ENCODE measurements at regions of chr19 and their contacts with region 1.

Region 1: GRCh38 chr19:35352448-35353304 is 5.0 kb downstream of the FFAR1 start:
- DNase-seq: peak; percentile 64 to 76 (median 73)
- H3K4me3 ChIP-seq: no peak overlapping the region
- H3K4me3 Mint-ChIP-seq: peak overlapping the region in 1 of 8 donors; percentile 17
- H3K27ac ChIP-seq: no peak overlapping the region
- H3K27ac Mint-ChIP-seq: peak overlapping the region in 2 of 7 donors; percentile 19 to 77
- H3K4me1 ChIP-seq: peaks cover 22% of the 10 kb centered on the region
- H3K4me1 Mint-ChIP-seq: peaks cover 10 to 18% (median 12%) of the 10 kb centered on the region in 4 donors
- H3K27me3 ChIP-seq: no peaks in the 10 kb centered on the region
- H3K27me3 Mint-ChIP-seq: peaks cover 0 to 8% of the 10 kb centered on the region in 2 donors

Region 2: DNA sequence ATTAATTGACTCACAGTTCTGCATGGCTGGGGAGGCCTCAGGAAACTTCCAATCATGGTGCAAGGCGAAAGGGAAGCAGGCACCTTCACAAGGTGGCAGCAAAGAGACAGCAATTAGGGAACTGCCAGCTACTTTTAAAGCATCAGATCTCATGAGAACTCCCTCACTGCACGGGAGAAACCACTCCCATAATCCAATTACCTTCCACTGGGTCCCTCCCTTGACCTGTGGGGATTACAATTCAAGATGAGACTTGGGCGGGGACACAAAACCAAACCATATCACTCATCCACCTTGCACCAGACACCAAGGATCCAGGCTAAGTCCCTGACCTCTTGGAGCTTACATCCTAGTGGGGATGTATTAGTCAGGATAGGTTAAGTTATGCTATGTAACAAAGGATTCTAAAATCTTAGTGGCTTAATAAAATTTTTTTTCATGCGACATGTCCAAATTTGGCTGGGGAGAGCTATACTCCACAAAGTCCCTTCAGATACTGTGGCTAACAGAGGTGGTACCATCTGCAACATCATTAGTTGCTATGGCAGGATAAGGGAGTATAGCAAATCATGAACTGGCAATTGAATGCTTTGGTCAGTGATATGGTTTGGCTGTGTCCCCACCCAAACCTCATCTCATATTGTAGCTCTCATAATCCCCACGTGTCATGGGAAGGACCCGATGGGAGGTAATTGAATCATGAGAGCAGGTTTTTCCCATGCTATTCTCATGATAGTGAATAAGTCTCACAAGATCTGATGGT is 115.9 kb before region 1 on chr19:
- CTCF ChIA-PET with region 1: interaction called, 12 read pairs
- POLR2A ChIA-PET with region 1: no interaction called
- intact Hi-C with region 1: no loop called
- DNase-seq: peak in 3 of 5 donors; percentile 34 to 38 (median 36)
- H3K4me3 ChIP-seq: no peak overlapping the region
- H3K4me3 Mint-ChIP-seq: no peak overlapping the region
- H3K27ac ChIP-seq: no peak overlapping the region
- H3K27ac Mint-ChIP-seq: peak overlapping the region in 5 of 7 donors; percentile 30 to 93 (median 59)
- H3K4me1 ChIP-seq: peaks cover 34% of the 10 kb centered on the region
- H3K4me1 Mint-ChIP-seq: peaks cover 20 to 42% (median 37%) of the 10 kb centered on the region in 4 donors
- H3K27me3 ChIP-seq: no peaks in the 10 kb centered on the region
- H3K27me3 Mint-ChIP-seq: no peaks in the 10 kb centered on the region

Region 3: GRCh38 chr19:35318650-35319448 is 33.8 kb before region 1 on chr19:
- CTCF ChIA-PET with region 1: no interaction called
- POLR2A ChIA-PET with region 1: no interaction called
- intact Hi-C with region 1: no loop called
- DNase-seq: no peak
- H3K4me3 ChIP-seq: no peak overlapping the region
- H3K4me3 Mint-ChIP-seq: no peak overlapping the region
- H3K27ac ChIP-seq: no peak overlapping the region
- H3K27ac Mint-ChIP-seq: peak overlapping the region in 1 of 7 donors; percentile 32
- H3K4me1 ChIP-seq: peaks cover 6% of the 10 kb centered on the region
- H3K4me1 Mint-ChIP-seq: peaks cover 0 to 12% (median 6%) of the 10 kb centered on the region in 4 donors
- H3K27me3 ChIP-seq: no peaks in the 10 kb centered on the region
- H3K27me3 Mint-ChIP-seq: peaks cover 0 to 2% of the 10 kb centered on the region in 2 donors

Region 4: DNA sequence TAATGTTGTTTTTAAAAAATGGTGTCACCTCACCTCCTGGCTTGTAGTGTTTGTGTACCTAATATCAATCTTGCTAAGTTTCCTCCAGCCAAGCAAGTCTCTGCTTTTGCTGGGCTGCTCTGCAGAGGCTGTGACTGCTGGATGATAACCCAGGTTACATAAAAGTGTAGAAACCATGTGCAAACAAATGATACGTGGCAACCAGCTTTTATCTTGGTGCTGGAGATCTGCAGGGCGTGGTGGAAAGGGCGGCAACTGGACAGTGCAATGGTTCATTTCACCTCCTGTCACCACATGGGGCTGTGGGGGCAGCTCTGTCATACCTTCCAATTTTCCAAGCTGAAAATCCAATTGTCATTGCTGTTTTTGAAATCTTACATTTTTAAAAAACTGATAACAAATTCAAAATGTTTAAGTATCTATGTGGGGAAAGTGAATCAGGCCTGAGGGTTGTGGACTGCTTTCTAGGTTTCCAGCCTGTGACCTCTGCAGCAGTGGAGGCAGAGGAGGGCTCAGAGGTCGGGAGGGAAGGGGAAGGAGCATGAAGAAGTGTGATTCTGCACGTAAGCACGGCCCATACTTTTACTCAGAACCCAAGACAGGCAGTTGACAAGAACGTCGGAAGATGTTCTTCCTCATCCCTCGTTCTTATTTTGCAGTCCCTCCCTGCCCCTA is 27.9 kb after region 1 on chr19:
- CTCF ChIA-PET with region 1: no interaction called
- POLR2A ChIA-PET with region 1: no interaction called
- intact Hi-C with region 1: no loop called
- DNase-seq: no peak
- H3K4me3 ChIP-seq: no peak overlapping the region
- H3K4me3 Mint-ChIP-seq: no peak overlapping the region
- H3K27ac ChIP-seq: no peak overlapping the region
- H3K27ac Mint-ChIP-seq: peak overlapping the region in 1 of 7 donors; percentile 13
- H3K4me1 ChIP-seq: no peaks in the 10 kb centered on the region
- H3K4me1 Mint-ChIP-seq: peaks cover 0 to 4% (median 3%) of the 10 kb centered on the region in 4 donors
- H3K27me3 ChIP-seq: no peaks in the 10 kb centered on the region
- H3K27me3 Mint-ChIP-seq: peaks cover 8 to 17% of the 10 kb centered on the region in 2 donors

Region 5: GRCh38 chr19:35462476-35462953 is 109.8 kb after region 1 on chr19:
- CTCF ChIA-PET with region 1: interaction called, 97 read pairs
- POLR2A ChIA-PET with region 1: interaction called, 20 read pairs
- intact Hi-C with region 1: no loop called
- DNase-seq: peak; percentile 84 to 90 (median 87)
- H3K4me3 ChIP-seq: peak overlapping the region in 1 of 2 donors; percentile 17
- H3K4me3 Mint-ChIP-seq: peak overlapping the region; percentile 42 to 91 (median 75)
- H3K27ac ChIP-seq: peak overlapping the region; percentile 62
- H3K27ac Mint-ChIP-seq: peak overlapping the region; percentile 78 to 100 (median 97)
- H3K4me1 ChIP-seq: peaks cover 54% of the 10 kb centered on the region
- H3K4me1 Mint-ChIP-seq: peaks cover 25 to 68% (median 48%) of the 10 kb centered on the region in 4 donors
- H3K27me3 ChIP-seq: no peaks in the 10 kb centered on the region
- H3K27me3 Mint-ChIP-seq: peaks cover 0 to 1% of the 10 kb centered on the region in 2 donors

Region 6: DNA sequence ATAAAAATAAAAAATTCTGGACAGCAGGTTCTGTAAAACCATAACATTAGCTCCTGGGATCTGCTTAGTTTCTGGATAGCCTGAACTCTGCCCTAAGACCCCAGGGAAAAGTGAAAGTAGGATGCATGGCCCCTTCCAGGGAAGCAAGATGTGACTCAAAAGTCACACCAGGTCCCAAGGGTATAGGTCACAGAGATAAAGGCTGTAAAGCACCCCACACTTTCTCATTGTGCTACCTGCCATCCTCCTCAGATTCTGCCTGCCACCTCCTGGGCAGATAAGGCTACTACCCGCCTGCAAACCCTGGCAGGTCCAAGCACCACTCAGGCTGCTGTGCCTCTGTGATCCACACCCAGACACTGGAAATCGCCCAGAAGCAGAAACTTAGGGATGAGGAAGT is 116.0 kb after region 1 on chr19:
- CTCF ChIA-PET with region 1: interaction called, 97 read pairs
- POLR2A ChIA-PET with region 1: interaction called, 20 read pairs
- intact Hi-C with region 1: loop called (anchors 1 kb)
- DNase-seq: peak; percentile 64 to 73 (median 71)
- H3K4me3 ChIP-seq: no peak overlapping the region
- H3K4me3 Mint-ChIP-seq: no peak overlapping the region
- H3K27ac ChIP-seq: no peak overlapping the region
- H3K27ac Mint-ChIP-seq: peak overlapping the region in 1 of 7 donors; percentile 47
- H3K4me1 ChIP-seq: peaks cover 12% of the 10 kb centered on the region
- H3K4me1 Mint-ChIP-seq: peaks cover 7 to 17% (median 16%) of the 10 kb centered on the region in 4 donors
- H3K27me3 ChIP-seq: no peaks in the 10 kb centered on the region
- H3K27me3 Mint-ChIP-seq: peaks cover 0 to 1% of the 10 kb centered on the region in 2 donors

Region 7: GRCh38 chr19:35487643-35488182 is 135.0 kb after region 1 on chr19:
- CTCF ChIA-PET with region 1: interaction called, 12 read pairs
- POLR2A ChIA-PET with region 1: no interaction called
- intact Hi-C with region 1: no loop called
- DNase-seq: no peak
- H3K4me3 ChIP-seq: no peak overlapping the region
- H3K4me3 Mint-ChIP-seq: no peak overlapping the region
- H3K27ac ChIP-seq: no peak overlapping the region
- H3K27ac Mint-ChIP-seq: no peak overlapping the region
- H3K4me1 ChIP-seq: no peaks in the 10 kb centered on the region
- H3K4me1 Mint-ChIP-seq: peaks cover 0 to 1% (median 0%) of the 10 kb centered on the region in 4 donors
- H3K27me3 ChIP-seq: no peaks in the 10 kb centered on the region
- H3K27me3 Mint-ChIP-seq: peaks cover 13% of the 10 kb centered on the region in 2 donors

Region 8: GRCh38 chr19:35495107-35496064 is 142.7 kb after region 1 on chr19:
- CTCF ChIA-PET with region 1: interaction called, 69 read pairs
- POLR2A ChIA-PET with region 1: interaction called, 3 read pairs
- intact Hi-C with region 1: loop called (anchors 1 kb)
- DNase-seq: peak; percentile 59 to 70 (median 63)
- H3K4me3 ChIP-seq: no peak overlapping the region
- H3K4me3 Mint-ChIP-seq: peak overlapping the region in 3 of 8 donors; percentile 38 to 51 (median 39)
- H3K27ac ChIP-seq: no peak overlapping the region
- H3K27ac Mint-ChIP-seq: peak overlapping the region in 3 of 7 donors; percentile 30 to 48 (median 36)
- H3K4me1 ChIP-seq: peaks cover 7% of the 10 kb centered on the region
- H3K4me1 Mint-ChIP-seq: peaks cover 0 to 9% (median 6%) of the 10 kb centered on the region in 4 donors
- H3K27me3 ChIP-seq: no peaks in the 10 kb centered on the region
- H3K27me3 Mint-ChIP-seq: peaks cover 9 to 15% of the 10 kb centered on the region in 2 donors